GM12878 (cell line): ENCODE measurements at regions of chr7 and their contacts with region 1.

Region 1: GRCh38 chr7:143287935-143288826 is at the start of gene CASP2:
- DNase-seq: peak; percentile 91
- ATAC-seq: peak; percentile 95
- H3K4me3 ChIP-seq: peak within 1 kb of the TSS; percentile 78
- H3K27ac ChIP-seq: peak within 1 kb of the TSS; percentile 92
- H3K4me1 ChIP-seq: peaks cover 10% of the 10 kb centered on the region
- H3K27me3 ChIP-seq: no peaks in the 10 kb centered on the region
- CTCF ChIP-seq: peak in 1 of 3 experiments; percentile 24; a peak in 1 of 6 replicates
- EP300 ChIP-seq: no peak
- POLR2A ChIP-seq: peak; percentile 90
- RAD21 ChIP-seq: no peak
- polyA plus RNA-seq, gene CASP2: 12.1 to 17.4 TPM

Region 2: GRCh38 chr7:142298009-142298408 is 990.2 kb before region 1 on chr7:
- CTCF ChIA-PET with region 1: no interaction called
- POLR2A ChIA-PET with region 1: no interaction called
- RAD21 ChIA-PET with region 1: no interaction called
- SMC1A ChIA-PET with region 1: no interaction called
- in situ Hi-C with region 1: no loop called
- intact Hi-C with region 1: no loop called
- DNase-seq: no peak
- ATAC-seq: no peak
- H3K4me3 ChIP-seq: no peak overlapping the region
- H3K27ac ChIP-seq: no peak overlapping the region
- H3K4me1 ChIP-seq: no peaks in the 10 kb centered on the region
- H3K27me3 ChIP-seq: no peaks in the 10 kb centered on the region; a peak in 1 of 4 replicates
- CTCF ChIP-seq: peak in 1 of 3 experiments; percentile 26; a peak in 2 of 6 replicates
- EP300 ChIP-seq: no peak
- POLR2A ChIP-seq: no peak
- RAD21 ChIP-seq: no peak

Region 3: DNA sequence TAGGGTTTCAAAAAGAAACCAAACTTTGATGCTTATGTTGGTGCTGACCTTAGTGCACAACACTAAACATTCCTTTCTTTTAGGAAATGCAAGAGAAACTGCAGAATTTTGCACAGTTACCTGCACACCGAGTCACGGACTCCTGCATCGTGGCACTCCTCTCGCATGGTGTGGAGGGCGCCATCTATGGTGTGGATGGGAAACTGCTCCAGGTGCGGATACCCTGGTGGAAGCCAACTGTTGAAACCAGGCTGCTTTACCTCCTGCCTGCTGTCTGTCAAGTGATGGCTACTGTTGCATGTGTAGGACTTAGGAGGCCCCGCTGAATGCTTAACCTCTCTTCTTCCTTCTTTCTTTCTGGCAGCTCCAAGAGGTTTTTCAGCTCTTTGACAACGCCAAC is 11.7 kb after region 1 on chr7:
- CTCF ChIA-PET with region 1: interaction called, 17 read pairs
- POLR2A ChIA-PET with region 1: interaction called, 4 read pairs
- RAD21 ChIA-PET with region 1: interaction called, 7 read pairs
- SMC1A ChIA-PET with region 1: interaction called, 4 read pairs
- in situ Hi-C with region 1: no loop called
- intact Hi-C with region 1: no loop called
- DNase-seq: no peak
- ATAC-seq: peak; percentile 75
- H3K4me3 ChIP-seq: no peak overlapping the region
- H3K27ac ChIP-seq: no peak overlapping the region
- H3K4me1 ChIP-seq: 0 out of 2 replicates have a peak, but pooled peaks cover 3% of the 10 kb centered on the region
- H3K27me3 ChIP-seq: no peaks in the 10 kb centered on the region
- CTCF ChIP-seq: peak; percentile 44 to 69 (median 61)
- EP300 ChIP-seq: no peak
- POLR2A ChIP-seq: 0 out of 2 replicates have a peak, but pooled peaks have one; percentile 33
- RAD21 ChIP-seq: peak; percentile 36; the same call in 1 of the 2 replicates

Region 4: GRCh38 chr7:143380255-143380645 is 92.1 kb after region 1 on chr7:
- CTCF ChIA-PET with region 1: interaction called, 7 read pairs
- POLR2A ChIA-PET with region 1: no interaction called
- RAD21 ChIA-PET with region 1: no interaction called
- SMC1A ChIA-PET with region 1: no interaction called
- in situ Hi-C with region 1: no loop called
- intact Hi-C with region 1: loop called (anchors 2 kb)
- DNase-seq: peak; percentile 46
- ATAC-seq: peak; percentile 76
- H3K4me3 ChIP-seq: peak overlapping the region; percentile 99
- H3K27ac ChIP-seq: peak overlapping the region; percentile 92
- H3K4me1 ChIP-seq: peaks cover 15% of the 10 kb centered on the region
- H3K27me3 ChIP-seq: no peaks in the 10 kb centered on the region
- CTCF ChIP-seq: peak; percentile 78 to 89 (median 85)
- EP300 ChIP-seq: no peak
- POLR2A ChIP-seq: no peak
- RAD21 ChIP-seq: peak; percentile 43